CD14-positive monocyte (primary cell): ENCODE measurements at regions of chrX and their contacts with region 1.

Region 1: GRCh38 chrX:41435708-41436107 is 11.4 kb upstream of the NYX start:
- DNase-seq: peak; percentile 67 to 80 (median 71)
- H3K4me3 ChIP-seq: peak overlapping the region in 1 of 3 experiments; percentile 56
- H3K4me3 Mint-ChIP-seq: peak overlapping the region; percentile 65 to 92
- H3K27ac ChIP-seq: peak overlapping the region; percentile 82
- H3K27ac Mint-ChIP-seq: peak overlapping the region; percentile 88 to 99 (median 98)
- H3K4me1 ChIP-seq: peaks cover 27 to 32% of the 10 kb centered on the region in 2 donors
- H3K4me1 Mint-ChIP-seq: peaks cover 18% of the 10 kb centered on the region
- H3K27me3 ChIP-seq: peaks cover 0 to 5% of the 10 kb centered on the region in 2 donors
- H3K27me3 Mint-ChIP-seq: peaks cover 0 to 5% (median 0%) of the 10 kb centered on the region in 3 donors
- CTCF ChIP-seq: no peak

Region 2: DNA sequence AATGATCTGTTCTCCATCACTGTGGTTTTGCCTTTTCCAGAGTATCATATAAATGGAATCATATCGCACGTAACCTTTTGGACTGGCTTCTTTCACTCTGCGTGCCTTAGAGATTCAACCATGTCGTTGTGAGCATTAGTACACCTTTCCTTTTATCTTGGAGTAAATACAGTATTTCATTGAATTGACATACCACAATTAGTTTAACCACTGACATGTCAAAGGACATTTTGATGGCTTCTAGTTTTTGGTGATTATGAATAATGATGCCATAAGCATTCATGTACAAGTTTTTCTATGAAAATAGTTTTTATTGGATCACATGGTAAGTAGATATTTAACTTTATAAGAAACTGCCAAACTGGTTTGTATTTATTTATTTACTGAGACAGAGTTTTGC is 66.6 kb before region 1 on chrX:
- intact Hi-C with region 1: no loop called
- DNase-seq: no peak
- H3K4me3 ChIP-seq: no peak overlapping the region
- H3K4me3 Mint-ChIP-seq: no peak overlapping the region
- H3K27ac ChIP-seq: no peak overlapping the region
- H3K27ac Mint-ChIP-seq: no peak overlapping the region
- H3K4me1 ChIP-seq: no peaks in the 10 kb centered on the region
- H3K4me1 Mint-ChIP-seq: no peaks in the 10 kb centered on the region
- H3K27me3 ChIP-seq: no peaks in the 10 kb centered on the region
- H3K27me3 Mint-ChIP-seq: peaks cover 0 to 31% (median 1%) of the 10 kb centered on the region in 3 donors
- CTCF ChIP-seq: no peak

Region 3: GRCh38 chrX:41384041-41384705 is 51.5 kb before region 1 on chrX:
- intact Hi-C with region 1: loop called in 1 of 2 experiments (anchors 10 kb)
- DNase-seq: peak; percentile 88 to 91 (median 89)
- H3K4me3 ChIP-seq: no peak overlapping the region
- H3K4me3 Mint-ChIP-seq: peak overlapping the region in 1 of 2 donors; percentile 39
- H3K27ac ChIP-seq: peak overlapping the region; percentile 71 to 72
- H3K27ac Mint-ChIP-seq: peak overlapping the region; percentile 77 to 94 (median 91)
- H3K4me1 ChIP-seq: peaks cover 33 to 40% of the 10 kb centered on the region in 2 donors
- H3K4me1 Mint-ChIP-seq: peaks cover 24% of the 10 kb centered on the region
- H3K27me3 ChIP-seq: no peaks in the 10 kb centered on the region
- H3K27me3 Mint-ChIP-seq: peaks cover 0 to 16% (median 0%) of the 10 kb centered on the region in 3 donors
- CTCF ChIP-seq: no peak